ENCODE measurements at regions of chr10 and their contacts with region 1.

Region 1: GRCh38 chr10:88835096-88835909 is 16.3 kb downstream of the ANKRD22 start:
- DNase-seq: peak; percentile 57 to 65
- H3K4me3 ChIP-seq: no peak overlapping the region
- H3K27ac ChIP-seq: no peak overlapping the region
- H3K4me1 ChIP-seq: no peaks in the 10 kb centered on the region
- H3K27me3 ChIP-seq: no peaks in the 10 kb centered on the region
- CTCF ChIP-seq: peak; percentile 85

Region 2: GRCh38 chr10:88565072-88565471 is 270.2 kb before region 1 on chr10:
- CTCF ChIA-PET with region 1: interaction called, 3 read pairs
- POLR2A ChIA-PET with region 1: no interaction called
- intact Hi-C with region 1: loop called (anchors 10 kb)
- DNase-seq: no peak
- H3K4me3 ChIP-seq: no peak overlapping the region
- H3K27ac ChIP-seq: no peak overlapping the region
- H3K4me1 ChIP-seq: no peaks in the 10 kb centered on the region
- H3K27me3 ChIP-seq: no peaks in the 10 kb centered on the region
- CTCF ChIP-seq: peak; percentile 60

Region 3: GRCh38 chr10:88865281-88865876 is 30.1 kb after region 1 on chr10:
- CTCF ChIA-PET with region 1: interaction called, 9 read pairs
- POLR2A ChIA-PET with region 1: no interaction called
- intact Hi-C with region 1: loop called (anchors 1 kb)
- DNase-seq: no peak
- H3K4me3 ChIP-seq: no peak overlapping the region
- H3K27ac ChIP-seq: no peak overlapping the region
- H3K4me1 ChIP-seq: peaks cover 16% of the 10 kb centered on the region; the same call in 1 of the 2 replicates
- H3K27me3 ChIP-seq: no peaks in the 10 kb centered on the region
- CTCF ChIP-seq: peak; percentile 30; the same call in 1 of the 2 replicates

Region 4: GRCh38 chr10:88880282-88881076 is 45.2 kb after region 1 on chr10:
- CTCF ChIA-PET with region 1: no interaction called
- POLR2A ChIA-PET with region 1: no interaction called
- intact Hi-C with region 1: loop called (anchors 5 kb)
- DNase-seq: peak; percentile 49 to 70
- H3K4me3 ChIP-seq: peak overlapping the region; percentile 82
- H3K27ac ChIP-seq: peak overlapping the region; percentile 92
- H3K4me1 ChIP-seq: peaks cover 27% of the 10 kb centered on the region
- H3K27me3 ChIP-seq: no peaks in the 10 kb centered on the region
- CTCF ChIP-seq: peak; percentile 27; the same call in 1 of the 2 replicates

Region 5: DNA sequence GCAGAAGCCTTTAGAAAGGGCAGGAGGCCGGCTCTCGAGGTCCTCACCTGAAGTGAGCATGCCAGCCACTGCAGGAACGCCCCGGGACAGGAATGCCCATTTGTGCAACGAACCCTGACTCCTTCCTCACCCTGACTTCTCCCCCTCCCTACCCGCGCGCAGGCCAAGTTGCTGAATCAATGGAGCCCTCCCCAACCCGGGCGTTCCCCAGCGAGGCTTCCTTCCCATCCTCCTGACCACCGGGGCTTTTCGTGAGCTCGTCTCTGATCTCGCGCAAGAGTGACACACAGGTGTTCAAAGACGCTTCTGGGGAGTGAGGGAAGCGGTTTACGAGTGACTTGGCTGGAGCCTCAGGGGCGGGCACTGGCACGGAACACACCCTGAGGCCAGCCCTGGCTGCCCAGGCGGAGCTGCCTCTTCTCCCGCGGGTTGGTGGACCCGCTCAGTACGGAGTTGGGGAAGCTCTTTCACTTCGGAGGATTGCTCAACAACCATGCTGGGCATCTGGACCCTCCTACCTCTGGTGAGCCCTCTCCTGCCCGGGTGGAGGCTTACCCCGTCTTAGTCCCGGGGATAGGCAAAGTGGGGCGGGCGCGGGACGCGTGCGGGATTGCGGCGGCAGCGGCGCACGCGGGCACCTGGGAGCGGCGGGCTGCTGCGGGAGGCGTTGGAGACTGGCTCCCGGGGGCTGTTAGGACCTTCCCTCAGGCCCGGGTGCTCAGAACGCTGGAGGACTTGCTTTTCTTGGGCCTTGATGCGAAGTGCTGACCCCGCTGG is 155.3 kb after region 1 on chr10 and contains the start of gene FAS:
- CTCF ChIA-PET with region 1: interaction called, 3 read pairs
- POLR2A ChIA-PET with region 1: no interaction called
- intact Hi-C with region 1: loop called (anchors 5 kb)
- DNase-seq: peak; percentile 67 to 71
- H3K4me3 ChIP-seq: peak within 1 kb of the TSS; percentile 85
- H3K27ac ChIP-seq: peak within 1 kb of the TSS; percentile 42
- H3K4me1 ChIP-seq: peaks cover 26% of the 10 kb centered on the region
- H3K27me3 ChIP-seq: no peaks in the 10 kb centered on the region
- CTCF ChIP-seq: no peak
- total RNA-seq, gene FAS: 7.6 and 8.5 TPM in 2 replicates